ENCODE measurements at regions of chr18 and their contacts with region 1.

Region 1: DNA sequence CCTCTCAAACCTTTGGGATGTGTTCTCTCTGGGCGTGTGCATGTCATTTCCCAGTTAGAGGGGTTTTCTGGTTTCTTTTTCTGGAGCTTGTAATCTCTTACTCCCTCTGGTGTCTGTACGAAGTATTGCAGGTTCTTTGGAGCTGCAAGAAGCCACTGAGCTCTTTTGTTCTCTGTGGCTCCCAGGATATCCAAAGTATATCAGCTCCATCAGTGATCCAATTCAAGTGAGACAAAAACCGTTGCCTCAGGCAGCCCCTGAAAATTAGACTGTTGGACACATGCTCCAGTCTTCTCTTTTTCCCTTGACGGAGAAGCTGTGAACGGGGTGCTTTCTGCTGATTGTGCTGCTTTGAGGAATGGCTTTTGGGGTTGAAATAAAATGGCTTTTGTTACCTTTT is 59.0 kb upstream of the LDLRAD4 start:
- DNase-seq: peak in 4 of 9 experiments; percentile 9 to 77 (median 57)
- ATAC-seq: peak; percentile 86
- H3K4me3 ChIP-seq: no peak overlapping the region
- H3K4me3 Mint-ChIP-seq: peak overlapping the region; percentile 20
- H3K27ac ChIP-seq: no peak overlapping the region
- H3K27ac Mint-ChIP-seq: no peak overlapping the region
- H3K4me1 ChIP-seq: no peaks in the 10 kb centered on the region
- H3K4me1 Mint-ChIP-seq: peaks cover 3% of the 10 kb centered on the region
- H3K27me3 ChIP-seq: peaks cover 0 to 2% of the 10 kb centered on the region in 2 experiments
- H3K27me3 Mint-ChIP-seq: no peaks in the 10 kb centered on the region
- CTCF ChIP-seq: peak; percentile 93

Region 2: DNA sequence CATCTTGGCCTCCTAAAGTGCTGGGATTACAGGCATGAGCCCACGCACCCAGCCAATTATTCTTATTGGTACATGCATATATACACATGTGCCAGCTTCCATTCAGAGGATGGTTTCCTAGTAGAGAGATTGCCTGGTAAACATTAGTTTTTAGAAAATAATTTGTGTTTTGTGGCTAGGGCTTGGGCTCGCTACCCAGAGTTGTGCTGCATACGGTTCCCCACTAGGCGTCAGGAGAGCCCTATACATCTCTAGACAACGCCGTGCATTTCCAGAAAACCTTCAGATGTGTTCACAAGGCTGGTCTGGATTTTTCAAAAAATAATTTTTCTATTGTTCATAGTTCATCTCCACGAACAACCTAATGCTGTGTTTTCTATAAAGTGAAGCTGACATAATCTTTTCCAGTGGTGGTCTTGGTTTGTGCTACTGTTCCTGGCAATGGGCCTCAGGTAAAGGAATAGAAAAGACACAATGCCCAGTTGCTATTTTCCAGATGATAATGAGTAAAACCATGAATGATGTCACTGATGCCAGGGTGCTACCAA is 767.9 kb before region 1 on chr18:
- CTCF ChIA-PET with region 1: interaction called, 3 read pairs
- POLR2A ChIA-PET with region 1: no interaction called
- intact Hi-C with region 1: loop called (anchors 5 to 10 kb)
- DNase-seq: peak in 8 of 9 experiments; percentile 28 to 74 (median 56)
- ATAC-seq: peak; percentile 99
- H3K4me3 ChIP-seq: no peak overlapping the region
- H3K4me3 Mint-ChIP-seq: no peak overlapping the region
- H3K27ac ChIP-seq: no peak overlapping the region
- H3K27ac Mint-ChIP-seq: no peak overlapping the region
- H3K4me1 ChIP-seq: no peaks in the 10 kb centered on the region
- H3K4me1 Mint-ChIP-seq: no peaks in the 10 kb centered on the region
- H3K27me3 ChIP-seq: no peaks in the 10 kb centered on the region
- H3K27me3 Mint-ChIP-seq: peaks cover 15% of the 10 kb centered on the region
- CTCF ChIP-seq: peak; percentile 78

Region 3: DNA sequence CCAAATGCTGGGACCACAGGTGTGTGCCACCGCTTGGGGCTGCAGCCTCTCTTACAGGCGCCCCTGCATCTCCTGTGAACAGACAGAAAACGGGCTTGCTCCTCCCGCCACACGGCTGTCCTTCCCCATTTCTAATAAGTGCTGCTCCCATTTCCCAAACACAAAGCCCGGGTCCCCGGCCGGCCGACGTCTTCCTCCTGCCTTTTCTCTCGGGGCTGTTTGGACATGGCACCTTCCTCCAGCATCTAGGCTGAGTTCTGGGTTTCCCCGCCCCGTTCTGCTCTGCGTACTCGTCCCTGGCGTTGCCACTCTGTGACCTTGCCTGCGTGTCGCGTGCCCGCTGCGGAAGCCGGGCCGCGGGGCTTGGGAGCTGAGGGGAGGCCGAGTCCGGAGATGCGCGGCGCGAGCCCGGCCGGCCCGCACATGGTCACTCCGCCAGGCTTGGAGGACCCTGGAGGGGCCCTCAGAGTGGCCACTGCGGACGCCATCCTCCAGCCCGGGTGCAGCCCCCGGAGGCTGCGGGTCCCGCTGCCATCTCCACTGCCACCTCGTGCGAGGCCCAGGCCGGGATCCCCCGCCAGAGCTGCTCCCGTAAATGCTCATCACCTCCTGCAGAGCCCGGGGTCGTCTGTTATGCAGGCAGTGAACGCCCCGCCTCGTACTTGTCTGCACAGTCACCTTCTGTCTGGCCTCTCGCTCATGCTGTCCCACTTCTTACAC is 725.6 kb before region 1 on chr18:
- CTCF ChIA-PET with region 1: no interaction called
- POLR2A ChIA-PET with region 1: no interaction called
- intact Hi-C with region 1: no loop called
- DNase-seq: no peak
- ATAC-seq: no peak
- H3K4me3 ChIP-seq: no peak overlapping the region
- H3K4me3 Mint-ChIP-seq: no peak overlapping the region
- H3K27ac ChIP-seq: no peak overlapping the region
- H3K27ac Mint-ChIP-seq: no peak overlapping the region
- H3K4me1 ChIP-seq: no peaks in the 10 kb centered on the region
- H3K4me1 Mint-ChIP-seq: no peaks in the 10 kb centered on the region
- H3K27me3 ChIP-seq: no peaks in the 10 kb centered on the region
- H3K27me3 Mint-ChIP-seq: no peaks in the 10 kb centered on the region
- CTCF ChIP-seq: no peak

Region 4: GRCh38 chr18:12990967-12991838 is 168.4 kb before region 1 on chr18 and contains the start of gene CEP192:
- CTCF ChIA-PET with region 1: interaction called, 3 read pairs
- POLR2A ChIA-PET with region 1: no interaction called
- intact Hi-C with region 1: loop called in 1 of 2 experiments (anchors 1 kb)
- DNase-seq: peak; percentile 94 to 99 (median 97)
- ATAC-seq: peak; percentile 96
- H3K4me3 ChIP-seq: peak within 1 kb of the TSS; percentile 79 to 90
- H3K4me3 Mint-ChIP-seq: peak within 1 kb of the TSS; percentile 98
- H3K27ac ChIP-seq: peak within 1 kb of the TSS; percentile 57 to 75
- H3K27ac Mint-ChIP-seq: peak within 1 kb of the TSS; percentile 97
- H3K4me1 ChIP-seq: peaks cover 27% of the 10 kb centered on the region
- H3K4me1 Mint-ChIP-seq: peaks cover 17% of the 10 kb centered on the region
- H3K27me3 ChIP-seq: no peaks in the 10 kb centered on the region
- H3K27me3 Mint-ChIP-seq: no peaks in the 10 kb centered on the region
- CTCF ChIP-seq: no peak
- total RNA-seq, gene CEP192: 22.8 to 24.3 TPM

Region 5: DNA sequence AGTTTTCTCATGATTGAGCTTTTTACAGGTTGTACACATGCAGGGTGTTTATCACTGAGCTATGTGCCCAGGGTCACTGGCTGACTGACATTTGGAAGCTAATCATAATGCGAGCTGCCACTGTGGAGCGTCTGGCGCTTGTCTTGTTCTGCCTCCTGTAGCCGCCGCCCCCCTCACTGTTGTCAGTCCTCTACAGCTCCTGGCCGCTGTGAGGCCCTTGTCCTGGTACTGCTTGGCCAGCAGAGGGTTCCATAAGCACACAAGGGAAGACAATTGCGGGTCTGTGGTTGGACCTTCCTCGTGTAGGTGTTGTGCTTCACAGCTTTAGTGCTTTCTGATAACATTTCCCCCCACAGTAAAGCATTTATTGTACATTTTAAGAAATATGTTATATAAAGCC is 46.6 kb before region 1 on chr18:
- CTCF ChIA-PET with region 1: interaction called, 15 read pairs
- POLR2A ChIA-PET with region 1: no interaction called
- intact Hi-C with region 1: loop called (anchors 1 kb)
- DNase-seq: peak in 4 of 9 experiments; percentile 12 to 53 (median 32)
- ATAC-seq: peak; percentile 69
- H3K4me3 ChIP-seq: no peak overlapping the region
- H3K4me3 Mint-ChIP-seq: no peak overlapping the region
- H3K27ac ChIP-seq: no peak overlapping the region
- H3K27ac Mint-ChIP-seq: no peak overlapping the region
- H3K4me1 ChIP-seq: no peaks in the 10 kb centered on the region
- H3K4me1 Mint-ChIP-seq: no peaks in the 10 kb centered on the region
- H3K27me3 ChIP-seq: no peaks in the 10 kb centered on the region
- H3K27me3 Mint-ChIP-seq: no peaks in the 10 kb centered on the region
- CTCF ChIP-seq: no peak

Region 6: GRCh38 chr18:13137670-13138419 is 21.7 kb before region 1 on chr18:
- CTCF ChIA-PET with region 1: interaction called, 9 read pairs
- POLR2A ChIA-PET with region 1: interaction called, 3 read pairs
- intact Hi-C with region 1: loop called in 1 of 2 experiments (anchors 1 kb)
- DNase-seq: peak; percentile 28 to 90 (median 61)
- ATAC-seq: peak; percentile 73
- H3K4me3 ChIP-seq: peak overlapping the region; percentile 84 to 98
- H3K4me3 Mint-ChIP-seq: peak overlapping the region; percentile 94
- H3K27ac ChIP-seq: peak overlapping the region; percentile 87 to 90
- H3K27ac Mint-ChIP-seq: peak overlapping the region; percentile 96
- H3K4me1 ChIP-seq: peaks cover 20% of the 10 kb centered on the region
- H3K4me1 Mint-ChIP-seq: peaks cover 28% of the 10 kb centered on the region
- H3K27me3 ChIP-seq: no peaks in the 10 kb centered on the region
- H3K27me3 Mint-ChIP-seq: no peaks in the 10 kb centered on the region
- CTCF ChIP-seq: no peak

Measured in CD8-positive, alpha-beta T cell (primary cell).